H1 (cell line): ENCODE measurements at regions of chr11 and their contacts with region 1.

Region 1: DNA sequence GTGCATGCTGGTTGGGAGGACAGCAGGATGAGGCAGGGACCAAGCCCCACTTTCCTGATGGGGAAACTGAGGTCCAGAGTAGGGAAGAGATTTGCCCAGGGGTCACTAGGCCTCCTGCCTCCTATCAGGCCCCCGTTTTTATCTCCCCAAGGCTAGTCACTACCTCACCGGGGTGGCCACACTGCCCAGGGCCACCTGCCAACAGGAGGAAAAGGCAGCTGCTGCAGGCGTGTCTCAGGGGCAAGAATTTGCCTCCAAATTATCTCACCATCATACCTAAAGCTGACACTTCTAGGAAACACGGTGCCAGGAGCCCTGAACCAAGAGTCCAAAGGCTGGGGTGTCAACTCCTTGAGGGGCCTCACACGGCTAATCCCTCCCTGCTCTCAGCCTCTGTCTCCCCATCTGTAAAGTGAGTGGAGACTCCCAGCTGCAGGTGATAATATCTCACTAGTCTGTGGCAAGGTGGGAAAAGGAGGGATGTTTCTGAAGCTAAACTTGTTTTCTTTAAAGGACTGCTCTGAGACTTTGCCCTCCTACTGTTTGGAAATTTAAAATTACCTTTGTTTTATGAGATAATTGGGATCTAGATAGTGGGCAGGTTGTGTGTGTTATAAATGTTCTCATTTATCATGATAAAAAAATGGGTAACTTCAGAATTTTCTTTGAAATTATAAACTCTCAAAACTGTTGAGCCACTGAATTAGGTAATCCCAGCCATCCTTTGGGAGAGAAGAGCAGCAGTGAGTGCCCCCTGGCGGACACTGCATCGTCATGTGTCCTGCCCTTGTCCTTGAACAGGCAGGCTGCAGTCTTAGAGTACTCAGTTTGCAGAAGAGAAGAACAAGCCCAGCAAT is 60.0 kb downstream of the MYO7A start:
- DNase-seq: peak in 1 of 2 experiments; percentile 83
- H3K4me3 ChIP-seq: no peak overlapping the region
- H3K27ac ChIP-seq: no peak overlapping the region
- H3K4me1 ChIP-seq: peaks cover 0 to 7% (median 6%) of the 10 kb centered on the region in 4 experiments; a peak in 6 of 7 replicates
- H3K27me3 ChIP-seq: no peaks in the 10 kb centered on the region
- CTCF ChIP-seq: peak; percentile 90 to 94 (median 90)
- EP300 ChIP-seq: no peak
- POLR2A ChIP-seq: no peak
- RAD21 ChIP-seq: peak; percentile 86 to 92

Region 2: DNA sequence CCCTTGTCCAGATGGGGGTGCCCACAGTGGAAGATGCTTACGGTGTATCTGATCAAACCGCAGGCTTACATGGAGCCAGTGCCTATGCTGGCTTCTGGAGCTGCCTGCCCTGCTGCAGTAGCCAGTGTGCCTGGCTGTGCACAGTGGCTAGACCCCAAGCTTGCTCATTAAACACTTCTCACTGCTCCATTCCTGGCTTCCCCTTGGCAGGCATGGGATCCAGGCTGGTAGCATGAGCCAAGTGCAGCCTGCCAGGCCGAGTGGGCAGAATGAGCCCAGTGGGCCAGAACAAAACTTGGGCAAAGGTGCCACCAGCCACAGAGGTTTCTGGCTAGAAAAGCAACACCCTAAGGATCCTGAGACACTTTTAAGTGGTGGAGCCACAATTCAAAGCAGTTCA is 209.2 kb before region 1 on chr11:
- CTCF ChIA-PET with region 1: no interaction called
- POLR2A ChIA-PET with region 1: no interaction called
- DNase-seq: no peak
- H3K4me3 ChIP-seq: no peak overlapping the region
- H3K27ac ChIP-seq: no peak overlapping the region
- H3K4me1 ChIP-seq: no peaks in the 10 kb centered on the region
- H3K27me3 ChIP-seq: no peaks in the 10 kb centered on the region
- CTCF ChIP-seq: no peak
- EP300 ChIP-seq: no peak
- POLR2A ChIP-seq: no peak
- RAD21 ChIP-seq: no peak

Region 3: GRCh38 chr11:77107950-77108349 is 80.1 kb before region 1 on chr11:
- CTCF ChIA-PET with region 1: interaction called, 51 read pairs
- POLR2A ChIA-PET with region 1: no interaction called
- DNase-seq: no peak
- H3K4me3 ChIP-seq: no peak overlapping the region
- H3K27ac ChIP-seq: no peak overlapping the region
- H3K4me1 ChIP-seq: peaks cover 0 to under 1% (median 0%) of the 10 kb centered on the region in 4 experiments; a peak in 1 of 7 replicates
- H3K27me3 ChIP-seq: no peaks in the 10 kb centered on the region
- CTCF ChIP-seq: no peak
- EP300 ChIP-seq: no peak
- POLR2A ChIP-seq: no peak
- RAD21 ChIP-seq: no peak

Region 4: GRCh38 chr11:77121096-77121640 is 66.8 kb before region 1 on chr11:
- CTCF ChIA-PET with region 1: interaction called, 248 read pairs
- POLR2A ChIA-PET with region 1: interaction called, 6 read pairs
- DNase-seq: no peak
- H3K4me3 ChIP-seq: no peak overlapping the region
- H3K27ac ChIP-seq: no peak overlapping the region
- H3K4me1 ChIP-seq: no peaks in the 10 kb centered on the region
- H3K27me3 ChIP-seq: no peaks in the 10 kb centered on the region
- CTCF ChIP-seq: no peak
- EP300 ChIP-seq: no peak
- POLR2A ChIP-seq: no peak
- RAD21 ChIP-seq: no peak

Region 5: GRCh38 chr11:77147668-77148321 is 40.2 kb before region 1 on chr11:
- CTCF ChIA-PET with region 1: interaction called, 45 read pairs
- POLR2A ChIA-PET with region 1: no interaction called
- DNase-seq: peak; percentile 29 to 79
- H3K4me3 ChIP-seq: peak overlapping the region; percentile 54 to 65 (median 58)
- H3K27ac ChIP-seq: no peak overlapping the region
- H3K4me1 ChIP-seq: peaks cover 0 to 11% (median 5%) of the 10 kb centered on the region in 4 experiments; a peak in 6 of 7 replicates
- H3K27me3 ChIP-seq: peaks cover 0 to 2% (median 0%) of the 10 kb centered on the region in 4 experiments; a peak in 2 of 7 replicates
- CTCF ChIP-seq: no peak
- EP300 ChIP-seq: no peak
- POLR2A ChIP-seq: no peak
- RAD21 ChIP-seq: no peak; a peak in 1 of 4 replicates

Region 6: DNA sequence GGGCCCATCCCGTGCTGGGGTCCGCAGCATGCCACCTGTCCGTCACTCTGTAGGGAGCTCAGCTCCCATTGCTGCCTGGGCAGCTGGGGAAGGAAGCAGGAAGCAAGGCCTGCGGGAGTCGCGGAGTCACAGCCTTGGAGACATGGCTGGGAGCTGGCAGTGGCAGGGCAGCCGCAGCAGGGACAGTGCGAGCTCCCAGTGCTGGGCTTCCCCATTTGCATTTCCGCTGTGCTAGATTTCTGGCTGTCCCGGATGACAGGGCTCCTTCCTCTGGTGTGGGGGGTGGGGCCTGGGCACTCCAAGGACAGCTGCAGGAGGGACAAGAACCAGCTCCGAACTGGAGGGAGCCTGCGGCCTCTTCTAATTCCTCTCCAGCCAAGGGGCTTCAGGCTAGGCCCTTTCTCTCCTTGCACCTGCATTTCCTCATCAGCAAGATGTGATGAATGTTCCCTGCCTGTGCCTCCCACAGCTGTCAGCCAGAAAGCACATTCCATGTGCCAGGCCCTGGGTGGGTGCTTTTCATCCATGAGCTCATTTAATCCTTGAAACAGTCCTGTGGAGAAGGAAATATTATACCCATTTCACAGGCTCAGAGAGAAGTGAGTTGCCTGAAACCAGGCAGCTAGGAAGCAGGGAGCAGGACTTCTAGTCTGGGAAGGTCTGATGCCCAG is 12.0 kb before region 1 on chr11:
- CTCF ChIA-PET with region 1: interaction called, 178 read pairs
- POLR2A ChIA-PET with region 1: interaction called, 4 read pairs
- DNase-seq: peak in 1 of 2 experiments; percentile 73
- H3K4me3 ChIP-seq: no peak overlapping the region
- H3K27ac ChIP-seq: 0 out of 2 replicates have a peak overlapping the region, but pooled peaks have one; percentile 30
- H3K4me1 ChIP-seq: peaks cover 18 to 50% (median 27%) of the 10 kb centered on the region in 4 experiments
- H3K27me3 ChIP-seq: peaks cover 0 to 3% (median 0%) of the 10 kb centered on the region in 4 experiments; a peak in 1 of 7 replicates
- CTCF ChIP-seq: no peak
- EP300 ChIP-seq: no peak
- POLR2A ChIP-seq: no peak
- RAD21 ChIP-seq: no peak

Region 7: GRCh38 chr11:77203901-77204755 is 16.1 kb after region 1 on chr11:
- CTCF ChIA-PET with region 1: interaction called, 45 read pairs
- POLR2A ChIA-PET with region 1: no interaction called
- DNase-seq: no peak
- H3K4me3 ChIP-seq: no peak overlapping the region
- H3K27ac ChIP-seq: no peak overlapping the region
- H3K4me1 ChIP-seq: no peaks in the 10 kb centered on the region; a peak in 1 of 7 replicates
- H3K27me3 ChIP-seq: no peaks in the 10 kb centered on the region; a peak in 1 of 7 replicates
- CTCF ChIP-seq: no peak
- EP300 ChIP-seq: no peak
- POLR2A ChIP-seq: no peak
- RAD21 ChIP-seq: no peak